Activated CD8-positive, alpha-beta T cell treated with anti-CD3 and anti-CD28 coated beads for 36 hours (primary cell): ENCODE measurements at regions of chr14 and their contacts with region 1.

Region 1: GRCh38 chr14:24605435-24606190 is 3.9 kb downstream of the GZMH start:
- DNase-seq: peak; percentile 86
- ATAC-seq: peak; percentile 85
- H3K4me3 Mint-ChIP-seq: peak overlapping the region; percentile 72
- H3K27ac Mint-ChIP-seq: peak overlapping the region; percentile 87
- H3K4me1 Mint-ChIP-seq: peaks cover 55% of the 10 kb centered on the region
- H3K27me3 Mint-ChIP-seq: no peaks in the 10 kb centered on the region
- CTCF ChIP-seq: peak; percentile 98

Region 2: GRCh38 chr14:24411443-24412389 is 193.9 kb before region 1 on chr14:
- CTCF ChIA-PET with region 1: no interaction called
- POLR2A ChIA-PET with region 1: no interaction called
- intact Hi-C with region 1: no loop called
- DNase-seq: peak; percentile 49
- ATAC-seq: peak; percentile 87
- H3K4me3 Mint-ChIP-seq: no peak overlapping the region
- H3K27ac Mint-ChIP-seq: no peak overlapping the region
- H3K4me1 Mint-ChIP-seq: no peaks in the 10 kb centered on the region
- H3K27me3 Mint-ChIP-seq: no peaks in the 10 kb centered on the region
- CTCF ChIP-seq: peak; percentile 57

Region 3: DNA sequence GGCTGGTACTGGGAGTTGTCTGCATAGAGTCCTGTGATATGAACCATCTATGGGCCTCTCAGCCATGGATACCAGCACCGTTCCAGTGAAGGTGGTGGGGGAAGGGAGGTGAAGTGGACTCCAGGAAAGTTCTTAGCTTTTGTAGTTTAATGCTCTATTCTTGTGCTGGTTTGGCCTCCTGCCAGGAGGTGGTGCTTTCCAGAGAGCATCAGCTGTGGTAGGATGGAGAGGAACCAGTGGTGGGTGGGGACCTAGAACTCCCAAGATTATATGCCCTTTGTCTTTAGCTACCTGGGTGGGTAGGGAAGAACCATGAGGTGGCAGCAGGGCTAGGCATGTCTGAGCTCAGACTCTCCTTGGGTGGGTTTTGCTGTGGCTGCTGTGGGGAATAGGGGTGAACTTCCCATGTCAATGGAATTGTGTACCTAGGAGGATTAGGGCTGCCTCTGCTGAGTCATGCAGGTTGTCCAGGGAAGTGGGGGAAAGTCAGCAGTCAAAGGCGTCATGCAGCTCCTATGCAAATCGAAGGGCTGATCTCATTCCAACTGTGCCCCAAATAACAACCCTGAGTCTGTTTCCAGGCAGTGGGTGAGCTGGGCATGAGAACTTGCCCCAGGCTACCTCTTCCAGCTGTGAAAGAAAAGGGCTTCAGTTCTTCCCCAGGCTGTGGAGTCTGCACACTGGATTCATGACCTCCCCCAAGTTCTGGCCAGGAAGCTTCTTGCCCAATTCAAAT is 10.4 kb before region 1 on chr14:
- CTCF ChIA-PET with region 1: interaction called, 12 read pairs
- POLR2A ChIA-PET with region 1: no interaction called
- intact Hi-C with region 1: no loop called
- DNase-seq: no peak
- ATAC-seq: no peak
- H3K4me3 Mint-ChIP-seq: no peak overlapping the region
- H3K27ac Mint-ChIP-seq: no peak overlapping the region
- H3K4me1 Mint-ChIP-seq: peaks cover 6% of the 10 kb centered on the region
- H3K27me3 Mint-ChIP-seq: peaks cover 18% of the 10 kb centered on the region
- CTCF ChIP-seq: no peak

Region 4: GRCh38 chr14:24665440-24665991 is 59.9 kb after region 1 on chr14:
- CTCF ChIA-PET with region 1: interaction called, 15 read pairs
- POLR2A ChIA-PET with region 1: interaction called, 7 read pairs
- intact Hi-C with region 1: no loop called
- DNase-seq: peak; percentile 90
- ATAC-seq: peak; percentile 87
- H3K4me3 Mint-ChIP-seq: peak overlapping the region; percentile 60
- H3K27ac Mint-ChIP-seq: peak overlapping the region; percentile 93
- H3K4me1 Mint-ChIP-seq: peaks cover 91% of the 10 kb centered on the region
- H3K27me3 Mint-ChIP-seq: no peaks in the 10 kb centered on the region
- CTCF ChIP-seq: no peak

Region 5: GRCh38 chr14:24673534-24674203 is 68.1 kb after region 1 on chr14:
- CTCF ChIA-PET with region 1: interaction called, 87 read pairs
- POLR2A ChIA-PET with region 1: interaction called, 22 read pairs
- intact Hi-C with region 1: loop called (anchors 2 kb)
- DNase-seq: peak; percentile 91
- ATAC-seq: peak; percentile 65
- H3K4me3 Mint-ChIP-seq: peak overlapping the region; percentile 71
- H3K27ac Mint-ChIP-seq: peak overlapping the region; percentile 99
- H3K4me1 Mint-ChIP-seq: peaks cover 85% of the 10 kb centered on the region
- H3K27me3 Mint-ChIP-seq: no peaks in the 10 kb centered on the region
- CTCF ChIP-seq: no peak

Region 6: GRCh38 chr14:24678801-24679247 is 73.2 kb after region 1 on chr14:
- CTCF ChIA-PET with region 1: interaction called, 87 read pairs
- POLR2A ChIA-PET with region 1: interaction called, 22 read pairs
- intact Hi-C with region 1: loop called (anchors 2 kb)
- DNase-seq: peak; percentile 85
- ATAC-seq: peak; percentile 42
- H3K4me3 Mint-ChIP-seq: peak overlapping the region; percentile 81
- H3K27ac Mint-ChIP-seq: peak overlapping the region; percentile 96
- H3K4me1 Mint-ChIP-seq: peaks cover 64% of the 10 kb centered on the region
- H3K27me3 Mint-ChIP-seq: no peaks in the 10 kb centered on the region
- CTCF ChIP-seq: peak; percentile 99